ENCODE measurements at regions of chr1 and their contacts with region 1.

Region 1: GRCh38 chr1:228378090-228378872 is 28.4 kb downstream of the TRIM11 start:
- DNase-seq: peak; percentile 54 to 71
- H3K4me3 ChIP-seq: peak overlapping the region; percentile 43 to 80 (median 64)
- H3K27ac ChIP-seq: peak overlapping the region; percentile 58 to 74
- H3K4me1 ChIP-seq: peaks cover 0 to 4% of the 10 kb centered on the region in 2 donors
- H3K27me3 ChIP-seq: no peaks in the 10 kb centered on the region
- CTCF ChIP-seq: peak in 2 of 3 donors; percentile 66 to 68
- POLR2A ChIP-seq: no peak

Region 2: GRCh38 chr1:228338521-228339051 is 39.7 kb before region 1 on chr1:
- intact Hi-C with region 1: loop called (anchors 1 kb)
- DNase-seq: peak in 1 of 2 donors; percentile 28
- H3K4me3 ChIP-seq: no peak overlapping the region
- H3K27ac ChIP-seq: no peak overlapping the region
- H3K4me1 ChIP-seq: no peaks in the 10 kb centered on the region
- H3K27me3 ChIP-seq: no peaks in the 10 kb centered on the region
- CTCF ChIP-seq: no peak
- POLR2A ChIP-seq: no peak

Region 3: DNA sequence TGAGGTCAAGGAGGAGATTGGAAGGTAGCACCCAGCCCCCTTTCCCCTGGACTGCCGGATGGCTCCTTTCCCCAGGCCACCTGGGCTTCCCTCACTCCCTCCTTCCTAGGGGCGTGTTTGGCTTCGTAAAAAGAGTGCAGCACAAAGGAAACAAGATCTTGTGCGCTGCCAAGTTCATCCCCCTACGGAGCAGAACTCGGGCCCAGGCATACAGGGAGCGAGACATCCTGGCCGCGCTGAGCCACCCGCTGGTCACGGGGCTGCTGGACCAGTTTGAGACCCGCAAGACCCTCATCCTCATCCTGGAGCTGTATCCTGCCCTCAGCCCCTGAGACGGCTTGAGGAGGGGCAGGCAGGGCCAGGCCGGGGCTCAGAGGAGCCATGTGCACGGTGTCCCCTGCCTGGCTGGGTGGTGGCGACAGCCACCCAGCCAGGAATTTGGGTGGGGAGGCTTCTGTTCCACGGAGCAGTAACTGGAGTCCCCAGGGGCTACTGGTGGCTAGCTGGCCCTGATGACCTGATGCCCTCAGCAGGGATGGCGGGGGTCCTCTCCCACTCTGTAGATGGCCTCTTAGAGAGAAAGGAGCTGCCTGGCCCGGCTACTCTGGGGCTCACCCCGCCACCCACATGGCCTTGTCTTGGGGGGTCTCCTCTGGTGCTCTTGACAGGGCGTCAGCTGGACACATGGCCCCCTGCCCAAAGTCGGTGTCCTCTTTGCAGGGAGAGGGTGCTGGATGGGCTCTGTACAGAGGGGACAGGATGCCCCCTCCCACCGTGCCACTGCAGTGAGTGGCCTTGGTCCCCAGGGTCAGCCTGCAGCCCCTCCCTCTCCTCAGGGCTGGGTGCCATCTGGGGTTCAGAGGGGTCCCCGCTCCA is 11.2 kb before region 1 on chr1:
- intact Hi-C with region 1: no loop called
- DNase-seq: peak in 1 of 2 donors; percentile 35
- H3K4me3 ChIP-seq: no peak overlapping the region
- H3K27ac ChIP-seq: no peak overlapping the region
- H3K4me1 ChIP-seq: no peaks in the 10 kb centered on the region
- H3K27me3 ChIP-seq: no peaks in the 10 kb centered on the region
- CTCF ChIP-seq: no peak
- POLR2A ChIP-seq: no peak